ENCODE measurements at regions of chr19 and their contacts with region 1.

Region 1: GRCh38 chr19:39110263-39110967 is 15.2 kb upstream of the PAK4 start:
- DNase-seq: no peak
- ATAC-seq: peak; percentile 97
- H3K4me3 ChIP-seq: no peak overlapping the region
- H3K27ac ChIP-seq: no peak overlapping the region
- H3K4me1 ChIP-seq: no peaks in the 10 kb centered on the region
- H3K27me3 ChIP-seq: no peaks in the 10 kb centered on the region; a peak in 1 of 4 replicates
- CTCF ChIP-seq: peak; percentile 78 to 85 (median 84)
- EP300 ChIP-seq: no peak
- POLR2A ChIP-seq: no peak
- RAD21 ChIP-seq: peak; percentile 65

Region 2: GRCh38 chr19:38959618-38960017 is 150.8 kb before region 1 on chr19:
- CTCF ChIA-PET with region 1: interaction called, 20 read pairs
- POLR2A ChIA-PET with region 1: no interaction called
- RAD21 ChIA-PET with region 1: interaction called, 6 read pairs
- SMC1A ChIA-PET with region 1: no interaction called
- in situ Hi-C with region 1: no loop called
- intact Hi-C with region 1: loop called (anchors 5 kb)
- DNase-seq: no peak
- ATAC-seq: no peak
- H3K4me3 ChIP-seq: no peak overlapping the region
- H3K27ac ChIP-seq: no peak overlapping the region
- H3K4me1 ChIP-seq: no peaks in the 10 kb centered on the region
- H3K27me3 ChIP-seq: no peaks in the 10 kb centered on the region
- CTCF ChIP-seq: no peak
- EP300 ChIP-seq: no peak
- POLR2A ChIP-seq: no peak
- RAD21 ChIP-seq: no peak

Region 3: DNA sequence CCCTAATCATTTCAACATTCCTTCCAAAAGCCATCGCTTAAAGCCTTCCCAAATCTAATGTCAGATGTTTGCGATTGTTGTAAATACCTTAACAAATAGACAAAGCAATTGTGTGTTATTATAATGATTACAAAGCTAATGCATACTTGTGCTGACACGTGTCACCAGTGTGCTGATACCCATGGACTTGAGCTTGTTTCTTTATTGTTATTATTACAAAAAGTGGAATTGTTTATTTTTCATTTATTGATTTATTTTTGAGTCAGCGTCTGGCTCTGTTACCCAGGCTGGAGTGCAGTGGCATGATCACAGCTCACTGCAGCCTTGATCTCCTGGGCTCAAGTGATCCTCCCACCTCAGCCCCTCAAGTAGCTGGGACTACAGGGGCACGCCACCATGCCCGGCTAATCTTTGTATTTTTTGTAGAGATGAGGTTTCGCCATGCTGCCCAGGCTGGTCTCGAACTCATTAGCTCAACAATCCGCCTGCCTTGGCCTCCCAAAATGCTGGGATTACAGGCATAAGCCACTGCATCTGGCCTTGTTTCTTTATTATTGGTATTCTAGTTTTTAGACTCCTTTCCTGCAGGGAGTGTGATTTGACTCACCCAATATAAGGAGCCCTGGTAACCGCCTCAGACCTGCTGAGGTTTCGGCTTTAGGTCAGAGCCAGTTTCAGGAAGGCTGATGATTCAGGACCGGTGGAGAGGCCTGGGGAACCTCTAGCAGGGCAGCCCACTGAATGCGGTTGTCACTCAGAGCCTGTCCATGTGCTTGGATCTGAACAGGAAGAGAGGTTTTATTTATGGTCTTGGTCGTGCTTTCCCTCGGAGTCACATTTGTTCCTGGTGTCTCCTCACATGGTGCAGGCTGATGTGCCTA is 132.7 kb before region 1 on chr19:
- CTCF ChIA-PET with region 1: no interaction called
- POLR2A ChIA-PET with region 1: no interaction called
- RAD21 ChIA-PET with region 1: no interaction called
- SMC1A ChIA-PET with region 1: no interaction called
- in situ Hi-C with region 1: no loop called
- intact Hi-C with region 1: no loop called
- DNase-seq: peak; percentile 80
- ATAC-seq: peak; percentile 93
- H3K4me3 ChIP-seq: no peak overlapping the region
- H3K27ac ChIP-seq: peak overlapping the region; percentile 78
- H3K4me1 ChIP-seq: peaks cover 21% of the 10 kb centered on the region
- H3K27me3 ChIP-seq: peaks cover 0 to 3% of the 10 kb centered on the region in 2 experiments; a peak in 2 of 4 replicates
- CTCF ChIP-seq: no peak
- EP300 ChIP-seq: peak; percentile 35 to 40; a peak in 1 of 4 replicates
- POLR2A ChIP-seq: no peak
- RAD21 ChIP-seq: peak; percentile 29

Region 4: DNA sequence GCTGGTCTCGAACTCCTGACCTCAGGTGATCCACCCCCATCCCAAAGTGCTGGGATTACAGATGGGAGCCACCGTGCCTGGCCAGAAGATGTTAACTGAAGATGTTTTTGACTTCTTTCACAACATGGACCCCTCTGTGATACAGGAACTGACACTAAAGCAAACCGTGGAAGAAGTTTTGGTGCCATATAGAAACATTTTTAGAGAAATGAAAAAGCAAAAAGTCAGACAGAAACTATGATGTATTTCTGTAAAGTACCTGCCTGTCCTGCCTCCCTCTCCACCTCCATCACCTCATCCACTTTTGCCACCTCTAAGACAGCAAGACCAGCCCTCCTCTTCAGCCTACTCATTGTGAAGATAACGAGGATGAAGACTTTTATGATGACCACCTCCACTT is 89.4 kb before region 1 on chr19:
- CTCF ChIA-PET with region 1: no interaction called
- POLR2A ChIA-PET with region 1: no interaction called
- RAD21 ChIA-PET with region 1: no interaction called
- SMC1A ChIA-PET with region 1: no interaction called
- in situ Hi-C with region 1: no loop called
- intact Hi-C with region 1: no loop called
- DNase-seq: peak; percentile 48
- ATAC-seq: peak; percentile 95
- H3K4me3 ChIP-seq: no peak overlapping the region
- H3K27ac ChIP-seq: no peak overlapping the region
- H3K4me1 ChIP-seq: peaks cover 23% of the 10 kb centered on the region
- H3K27me3 ChIP-seq: no peaks in the 10 kb centered on the region
- CTCF ChIP-seq: no peak
- EP300 ChIP-seq: peak; percentile 63 to 76; a peak in 3 of 4 replicates
- POLR2A ChIP-seq: no peak
- RAD21 ChIP-seq: no peak

Region 5: GRCh38 chr19:39052243-39052746 is 58.1 kb before region 1 on chr19:
- CTCF ChIA-PET with region 1: no interaction called
- POLR2A ChIA-PET with region 1: no interaction called
- RAD21 ChIA-PET with region 1: no interaction called
- SMC1A ChIA-PET with region 1: no interaction called
- in situ Hi-C with region 1: no loop called
- intact Hi-C with region 1: no loop called
- DNase-seq: no peak
- ATAC-seq: peak; percentile 97
- H3K4me3 ChIP-seq: no peak overlapping the region
- H3K27ac ChIP-seq: no peak overlapping the region
- H3K4me1 ChIP-seq: no peaks in the 10 kb centered on the region
- H3K27me3 ChIP-seq: no peaks in the 10 kb centered on the region; a peak in 1 of 4 replicates
- CTCF ChIP-seq: peak; percentile 59 to 93 (median 79)
- EP300 ChIP-seq: no peak
- POLR2A ChIP-seq: no peak
- RAD21 ChIP-seq: peak; percentile 53

Region 6: DNA sequence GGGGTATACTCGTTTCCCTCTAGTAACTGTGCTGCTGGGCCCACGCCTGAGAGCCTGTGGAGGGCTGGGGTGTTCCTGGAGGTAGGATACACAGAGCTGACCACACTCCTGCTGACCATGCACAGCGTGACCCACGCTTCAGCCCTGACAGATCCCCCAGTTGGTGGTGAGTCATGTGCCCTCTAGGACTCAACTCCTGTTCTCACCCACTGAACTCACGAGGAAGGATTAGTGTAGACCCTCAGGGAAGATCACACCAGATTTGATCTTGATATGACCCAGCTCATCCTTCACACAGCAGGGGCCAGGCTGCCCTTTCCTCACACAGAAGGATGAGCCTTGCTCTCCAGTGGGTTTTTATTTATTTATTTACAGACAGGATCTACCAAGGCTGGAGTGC is 39.5 kb before region 1 on chr19:
- CTCF ChIA-PET with region 1: no interaction called
- POLR2A ChIA-PET with region 1: no interaction called
- RAD21 ChIA-PET with region 1: no interaction called
- SMC1A ChIA-PET with region 1: no interaction called
- in situ Hi-C with region 1: no loop called
- intact Hi-C with region 1: no loop called
- DNase-seq: no peak
- ATAC-seq: no peak
- H3K4me3 ChIP-seq: no peak overlapping the region
- H3K27ac ChIP-seq: no peak overlapping the region
- H3K4me1 ChIP-seq: no peaks in the 10 kb centered on the region
- H3K27me3 ChIP-seq: no peaks in the 10 kb centered on the region
- CTCF ChIP-seq: no peak
- EP300 ChIP-seq: no peak
- POLR2A ChIP-seq: no peak
- RAD21 ChIP-seq: no peak

Region 7: GRCh38 chr19:39187559-39187957 is 77.1 kb after region 1 on chr19:
- CTCF ChIA-PET with region 1: no interaction called
- POLR2A ChIA-PET with region 1: no interaction called
- RAD21 ChIA-PET with region 1: no interaction called
- SMC1A ChIA-PET with region 1: no interaction called
- in situ Hi-C with region 1: no loop called
- intact Hi-C with region 1: loop called (anchors 1 kb)
- DNase-seq: no peak
- ATAC-seq: no peak; the same call in 2 of the 3 replicates
- H3K4me3 ChIP-seq: no peak overlapping the region
- H3K27ac ChIP-seq: no peak overlapping the region
- H3K4me1 ChIP-seq: no peaks in the 10 kb centered on the region
- H3K27me3 ChIP-seq: no peaks in the 10 kb centered on the region
- CTCF ChIP-seq: no peak
- EP300 ChIP-seq: no peak
- POLR2A ChIP-seq: no peak
- RAD21 ChIP-seq: no peak